ENCODE measurements at regions of chr2 and their contacts with region 1.

Region 1: GRCh38 chr2:27281855-27282559 is at the start of gene TRIM54:
- DNase-seq: no peak
- H3K4me3 ChIP-seq: no peak within 1 kb of the TSS
- H3K27ac ChIP-seq: no peak within 1 kb of the TSS
- H3K4me1 ChIP-seq: peaks cover 0 to 2% (median 0%) of the 10 kb centered on the region in 4 donors
- H3K27me3 ChIP-seq: peaks cover 0 to 37% of the 10 kb centered on the region in 2 donors
- CTCF ChIP-seq: no peak

Region 2: GRCh38 chr2:26959331-26959730 is 322.7 kb before region 1 on chr2:
- intact Hi-C with region 1: loop called (anchors 10 kb)
- DNase-seq: no peak
- H3K4me3 ChIP-seq: no peak overlapping the region
- H3K27ac ChIP-seq: no peak overlapping the region
- H3K4me1 ChIP-seq: peaks cover 0 to 4% (median 4%) of the 10 kb centered on the region in 4 donors
- H3K27me3 ChIP-seq: peaks cover 0 to 56% of the 10 kb centered on the region in 2 donors
- CTCF ChIP-seq: no peak

Region 3: GRCh38 chr2:27095745-27096651 is 186.0 kb before region 1 on chr2:
- intact Hi-C with region 1: loop called (anchors 2 kb)
- DNase-seq: no peak
- H3K4me3 ChIP-seq: peak overlapping the region; percentile 19 to 37
- H3K27ac ChIP-seq: no peak overlapping the region
- H3K4me1 ChIP-seq: peaks cover 0 to 8% (median 4%) of the 10 kb centered on the region in 4 donors
- H3K27me3 ChIP-seq: no peaks in the 10 kb centered on the region
- CTCF ChIP-seq: no peak

Measured in tibial artery (tissue), 4 donors.